ENCODE measurements at regions of chr14 and their contacts with region 1.

Region 1: GRCh38 chr14:54881235-54881760 is 21.3 kb downstream of the GCH1 start:
- DNase-seq: peak in 17 of 35 experiments; percentile 6 to 58 (median 17)
- ATAC-seq: peak; percentile 74 to 80 (median 79)
- H3K4me3 ChIP-seq: peak overlapping the region; percentile 48 to 57
- H3K4me3 Mint-ChIP-seq: peak overlapping the region; percentile 76 to 89 (median 82)
- H3K27ac ChIP-seq: peak overlapping the region; percentile 87
- H3K27ac Mint-ChIP-seq: peak overlapping the region; percentile 95 to 98
- H3K4me1 ChIP-seq: peaks cover 22 to 25% of the 10 kb centered on the region in 2 experiments
- H3K4me1 Mint-ChIP-seq: peaks cover 59% of the 10 kb centered on the region in 3 donors
- H3K27me3 ChIP-seq: no peaks in the 10 kb centered on the region
- H3K27me3 Mint-ChIP-seq: no peaks in the 10 kb centered on the region

Region 2: DNA sequence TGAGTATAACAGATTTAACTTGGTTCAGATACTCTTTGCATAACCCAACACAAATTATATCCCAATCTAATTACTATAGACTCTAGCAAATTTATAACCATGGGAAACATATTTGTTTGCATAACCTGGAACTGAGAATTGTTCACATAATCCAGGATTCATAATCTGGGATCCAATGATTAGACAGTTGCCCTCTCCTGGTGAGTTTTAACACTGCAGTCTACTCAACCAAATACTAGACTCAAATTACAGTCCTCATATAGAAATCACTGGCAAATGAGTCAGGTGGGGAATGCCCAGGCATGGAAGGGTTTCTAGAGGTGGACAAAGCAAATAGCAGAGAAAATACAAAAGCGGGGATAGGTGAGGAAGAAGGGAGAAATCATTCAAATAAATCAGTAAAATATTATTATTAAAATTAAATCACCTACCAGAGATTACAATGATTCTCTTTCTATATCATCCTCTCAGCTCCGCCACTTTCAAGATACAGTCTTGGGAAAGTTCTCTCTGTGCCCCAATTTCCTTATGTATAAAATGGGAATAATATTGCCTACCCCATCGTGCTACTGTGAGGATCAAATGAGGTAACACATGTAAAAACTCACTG is 12.0 kb after region 1 on chr14:
- CTCF ChIA-PET with region 1: interaction called, 4 to 12 read pairs
- POLR2A ChIA-PET with region 1: interaction called in 1 of 2 experiments, 3 read pairs
- DNase-seq: peak in 4 of 35 experiments; percentile 9 to 67 (median 19)
- ATAC-seq: peak; percentile 42 to 74 (median 60)
- H3K4me3 ChIP-seq: no peak overlapping the region
- H3K4me3 Mint-ChIP-seq: no peak overlapping the region
- H3K27ac ChIP-seq: no peak overlapping the region
- H3K27ac Mint-ChIP-seq: peak overlapping the region in 1 of 2 donors; percentile 7
- H3K4me1 ChIP-seq: peaks cover 0 to 1% of the 10 kb centered on the region in 2 experiments
- H3K4me1 Mint-ChIP-seq: peaks cover 39 to 58% (median 58%) of the 10 kb centered on the region in 3 donors
- H3K27me3 ChIP-seq: no peaks in the 10 kb centered on the region
- H3K27me3 Mint-ChIP-seq: no peaks in the 10 kb centered on the region

Region 3: GRCh38 chr14:54902521-54903420 is 21.5 kb after region 1 on chr14 and contains the start of gene GCH1:
- CTCF ChIA-PET with region 1: interaction called, 5 to 27 read pairs
- POLR2A ChIA-PET with region 1: interaction called, 4 to 8 read pairs
- DNase-seq: peak; percentile 31 to 88 (median 59)
- ATAC-seq: peak; percentile 81 to 85 (median 83)
- H3K4me3 ChIP-seq: peak within 1 kb of the TSS; percentile 94 to 96
- H3K4me3 Mint-ChIP-seq: peak within 1 kb of the TSS; percentile 83 to 88 (median 86)
- H3K27ac ChIP-seq: peak within 1 kb of the TSS; percentile 94
- H3K27ac Mint-ChIP-seq: peak within 1 kb of the TSS; percentile 88 to 91
- H3K4me1 ChIP-seq: peaks cover 4 to 29% of the 10 kb centered on the region in 2 experiments
- H3K4me1 Mint-ChIP-seq: peaks cover 20 to 34% (median 24%) of the 10 kb centered on the region in 3 donors
- H3K27me3 ChIP-seq: no peaks in the 10 kb centered on the region
- H3K27me3 Mint-ChIP-seq: no peaks in the 10 kb centered on the region
- total RNA-seq, gene GCH1: 26.5 to 31.2 (median 29.2) TPM

Measured in T-cell (primary cell).